GM10248 (cell line): ENCODE measurements at regions of chr2 and their contacts with region 1.

Region 1: GRCh38 chr2:173402405-173402974 is 47.8 kb downstream of the CDCA7 start:
- DNase-seq: peak; percentile 76
- CTCF ChIP-seq: peak; percentile 79

Region 2: GRCh38 chr2:172829229-172829628 is 573.3 kb before region 1 on chr2:
- CTCF ChIA-PET with region 1: no interaction called
- POLR2A ChIA-PET with region 1: no interaction called
- DNase-seq: no peak
- CTCF ChIP-seq: no peak

Region 3: GRCh38 chr2:173386021-173386737 is 16.3 kb before region 1 on chr2:
- CTCF ChIA-PET with region 1: interaction called, 22 read pairs
- POLR2A ChIA-PET with region 1: no interaction called
- DNase-seq: no peak
- CTCF ChIP-seq: no peak

Region 4: GRCh38 chr2:173414823-173415322 is 12.4 kb after region 1 on chr2:
- CTCF ChIA-PET with region 1: interaction called, 26 read pairs
- POLR2A ChIA-PET with region 1: no interaction called
- DNase-seq: no peak
- CTCF ChIP-seq: no peak

Region 5: DNA sequence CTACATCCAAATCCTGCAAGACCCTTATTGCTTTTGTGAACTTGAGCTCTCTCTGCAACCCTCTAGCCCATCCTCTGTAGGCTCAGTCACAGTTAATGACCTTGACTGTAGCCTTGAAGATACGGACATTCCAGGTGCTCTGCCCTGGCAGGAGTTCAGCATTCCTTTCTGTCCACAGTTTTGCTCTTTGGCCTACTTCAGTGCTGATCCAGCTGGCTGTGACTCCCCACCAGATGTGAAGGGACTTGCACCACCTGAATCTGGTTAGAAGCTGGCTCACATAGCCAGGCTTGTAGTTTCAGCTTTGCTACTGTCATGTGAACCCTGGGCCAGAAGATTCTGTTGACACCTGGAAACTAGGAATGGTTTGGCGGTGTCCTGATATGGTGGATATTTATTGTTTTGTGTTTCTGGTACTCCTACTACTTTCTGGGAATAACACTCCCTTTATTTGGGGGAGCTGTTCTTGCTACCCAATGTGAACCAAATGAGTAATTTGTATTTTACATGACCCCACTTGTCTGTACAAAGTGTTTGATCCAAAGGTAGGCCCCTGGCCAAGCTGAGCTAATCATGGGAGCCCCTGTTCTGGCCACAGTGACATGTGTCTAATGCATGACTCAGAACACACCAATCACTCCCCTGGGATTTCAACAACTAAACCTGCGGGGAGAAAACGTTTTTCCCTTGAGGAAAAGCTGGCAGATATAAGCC is 25.6 kb after region 1 on chr2:
- CTCF ChIA-PET with region 1: interaction called, 22 read pairs
- POLR2A ChIA-PET with region 1: no interaction called
- DNase-seq: no peak
- CTCF ChIP-seq: no peak

Region 6: GRCh38 chr2:173448938-173449471 is 46.5 kb after region 1 on chr2:
- CTCF ChIA-PET with region 1: interaction called, 37 read pairs
- POLR2A ChIA-PET with region 1: no interaction called
- DNase-seq: peak; percentile 72
- CTCF ChIP-seq: peak; percentile 40

Region 7: DNA sequence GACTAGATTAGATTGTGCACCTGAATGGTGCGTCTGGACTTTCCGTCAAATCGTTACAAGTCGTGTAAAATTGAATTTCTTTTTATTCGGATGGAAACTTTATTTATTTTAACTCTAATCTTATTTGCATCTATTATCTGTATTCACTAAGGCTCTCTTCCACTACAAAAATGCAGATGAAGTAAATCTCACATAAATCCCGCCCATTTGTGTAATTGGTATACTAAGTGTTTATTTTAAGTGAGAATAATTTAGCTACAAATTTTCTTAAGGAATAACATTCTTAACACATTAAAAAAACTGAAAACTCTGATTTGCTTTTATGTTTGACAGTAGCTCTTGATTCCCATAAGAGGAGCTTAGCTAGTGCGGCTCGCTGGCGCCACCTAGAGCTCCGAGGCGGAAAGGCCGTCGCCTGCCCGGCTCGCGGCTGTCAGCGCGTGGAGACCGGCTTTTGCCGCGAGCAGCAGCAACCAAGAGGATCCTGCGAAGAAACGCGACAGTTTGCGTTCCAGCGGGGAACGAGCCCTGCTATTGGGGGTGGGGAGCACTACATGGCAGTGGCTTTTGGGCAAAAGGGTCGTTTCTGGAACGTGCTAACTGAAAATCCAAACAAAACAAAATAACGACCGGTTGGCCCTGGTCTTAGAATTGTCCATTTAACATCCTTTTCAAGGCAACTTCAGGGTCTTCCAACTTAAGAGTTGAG is 939.0 kb after region 1 on chr2:
- CTCF ChIA-PET with region 1: interaction called, 53 read pairs
- POLR2A ChIA-PET with region 1: no interaction called
- DNase-seq: peak; percentile 84
- CTCF ChIP-seq: peak; percentile 98